Endothelial cell of umbilical vein (primary cell): ENCODE measurements at regions of chr12 and their contacts with region 1.

Region 1: GRCh38 chr12:43776498-43776897 is 17.7 kb downstream of the IRAK4 start:
- DNase-seq: peak; percentile 18
- H3K4me3 ChIP-seq: no peak overlapping the region
- H3K27ac ChIP-seq: no peak overlapping the region
- H3K4me1 ChIP-seq: no peaks in the 10 kb centered on the region
- H3K27me3 ChIP-seq: no peaks in the 10 kb centered on the region
- CTCF ChIP-seq: peak; percentile 5 to 14
- POLR2A ChIP-seq: no peak

Region 2: GRCh38 chr12:43937947-43938346 is 161.4 kb after region 1 on chr12:
- CTCF ChIA-PET with region 1: no interaction called
- POLR2A ChIA-PET with region 1: no interaction called
- dilution Hi-C with region 1: no loop called
- intact Hi-C with region 1: loop called (anchors 5 kb)
- DNase-seq: peak; percentile 4
- H3K4me3 ChIP-seq: no peak overlapping the region
- H3K27ac ChIP-seq: no peak overlapping the region
- H3K4me1 ChIP-seq: no peaks in the 10 kb centered on the region
- H3K27me3 ChIP-seq: no peaks in the 10 kb centered on the region
- CTCF ChIP-seq: peak; percentile 24 to 54
- POLR2A ChIP-seq: no peak

Region 3: GRCh38 chr12:44260581-44260980 is 484.1 kb after region 1 on chr12:
- CTCF ChIA-PET with region 1: no interaction called
- POLR2A ChIA-PET with region 1: no interaction called
- dilution Hi-C with region 1: no loop called
- intact Hi-C with region 1: no loop called
- DNase-seq: no peak
- H3K4me3 ChIP-seq: no peak overlapping the region
- H3K27ac ChIP-seq: no peak overlapping the region
- H3K4me1 ChIP-seq: no peaks in the 10 kb centered on the region
- H3K27me3 ChIP-seq: no peaks in the 10 kb centered on the region
- CTCF ChIP-seq: no peak
- POLR2A ChIP-seq: no peak